ENCODE measurements at regions of chr4 and their contacts with region 1.

Region 1: DNA sequence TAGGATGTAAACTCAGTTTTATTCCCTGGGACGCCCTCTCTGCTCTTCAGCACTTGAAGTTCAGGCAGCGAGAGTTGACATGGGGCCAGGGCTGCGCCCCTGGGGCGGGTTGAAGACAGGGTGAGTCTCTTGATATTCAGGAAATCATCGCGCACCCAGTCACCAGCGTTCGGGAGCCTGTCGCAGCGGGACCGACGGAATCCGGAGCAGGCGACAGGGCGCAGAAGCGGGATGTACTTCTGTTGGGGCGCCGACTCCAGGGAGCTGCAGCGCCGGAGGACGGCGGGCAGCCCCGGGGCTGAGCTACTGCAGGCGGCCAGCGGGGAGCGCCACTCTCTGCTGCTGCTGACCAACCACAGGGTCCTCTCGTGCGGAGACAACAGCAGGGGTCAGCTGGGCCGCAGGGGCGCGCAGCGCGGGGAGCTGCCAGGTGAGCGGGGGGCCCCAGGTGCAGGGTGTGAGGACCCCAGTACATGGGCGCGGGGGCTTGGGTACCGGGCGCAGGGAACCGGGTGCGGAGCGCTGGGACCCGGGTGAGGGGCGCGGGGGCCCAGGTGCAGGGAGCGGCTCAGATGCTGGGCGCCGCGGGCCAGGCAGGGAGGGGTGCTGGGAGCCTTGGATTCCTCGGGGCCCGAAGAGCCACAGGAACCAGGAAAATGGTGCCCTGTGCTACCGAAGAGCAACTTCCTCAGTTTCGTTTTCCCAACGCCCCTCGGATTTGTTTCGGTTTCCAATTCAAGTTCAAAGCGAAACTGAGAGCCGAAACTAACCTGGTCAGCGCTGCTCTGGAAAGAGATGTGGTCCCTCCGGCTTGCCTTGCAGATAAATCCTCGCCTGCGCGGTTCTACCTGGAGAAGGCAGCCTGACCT is at the start of gene HERC6:
- DNase-seq: peak; percentile 12 to 84 (median 72)
- H3K4me3 ChIP-seq: peak within 1 kb of the TSS; percentile 63 to 99 (median 91)
- H3K27ac ChIP-seq: peak within 1 kb of the TSS; percentile 70 to 99 (median 92)
- H3K27me3 ChIP-seq: no peaks in the 10 kb centered on the region
- CTCF ChIP-seq: peak in 54 of 56 donors; percentile 30 to 79 (median 64)
- total RNA-seq, gene HERC6: 8.9 to 84.3 (median 23.3) TPM

Region 2: DNA sequence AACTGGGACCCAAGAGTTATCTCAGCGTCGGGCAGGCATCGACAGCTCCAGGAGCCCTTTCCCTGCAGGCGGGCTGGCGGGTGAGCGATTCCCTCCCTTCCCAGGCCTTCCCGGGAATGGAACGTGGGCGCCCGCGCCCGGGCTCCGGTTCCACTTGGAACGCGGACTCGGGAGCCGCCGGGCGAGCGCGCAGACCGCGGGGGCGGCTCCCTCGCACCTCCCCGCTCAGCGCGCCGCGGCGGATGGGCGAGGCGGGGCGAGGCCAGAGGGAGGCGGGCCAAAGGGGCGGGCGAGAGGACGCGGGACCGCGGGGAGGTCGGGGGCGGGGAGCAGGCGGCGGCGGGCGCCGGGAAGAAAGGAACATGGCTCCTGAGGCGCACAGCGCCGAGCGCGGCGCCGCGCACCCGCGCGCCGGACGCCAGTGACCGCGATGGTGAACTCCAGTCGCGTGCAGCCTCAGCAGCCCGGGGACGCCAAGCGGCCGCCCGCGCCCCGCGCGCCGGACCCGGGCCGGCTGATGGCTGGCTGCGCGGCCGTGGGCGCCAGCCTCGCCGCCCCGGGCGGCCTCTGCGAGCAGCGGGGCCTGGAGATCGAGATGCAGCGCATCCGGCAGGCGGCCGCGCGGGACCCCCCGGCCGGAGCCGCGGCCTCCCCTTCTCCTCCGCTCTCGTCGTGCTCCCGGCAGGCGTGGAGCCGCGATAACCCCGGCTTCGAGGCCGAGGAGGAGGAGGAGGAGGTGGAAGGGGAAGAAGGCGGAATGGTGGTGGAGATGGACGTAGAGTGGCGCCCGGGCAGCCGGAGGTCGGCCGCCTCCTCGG is 371.4 kb before region 1 on chr4 and contains the start of gene PKD2:
- intact Hi-C with region 1: loop called in 1 of 2 experiments (anchors 10 kb)
- DNase-seq: peak; percentile 76 to 93 (median 84)
- H3K4me3 ChIP-seq: peak within 1 kb of the TSS; percentile 64 to 94 (median 84)
- H3K27ac ChIP-seq: peak within 1 kb of the TSS; percentile 64 to 97 (median 91)
- H3K27me3 ChIP-seq: no peaks in the 10 kb centered on the region
- CTCF ChIP-seq: peak in 11 of 56 donors; percentile 9 to 30 (median 16)
- total RNA-seq, gene PKD2: 29.7 to 60.9 (median 40.7) TPM

Region 3: DNA sequence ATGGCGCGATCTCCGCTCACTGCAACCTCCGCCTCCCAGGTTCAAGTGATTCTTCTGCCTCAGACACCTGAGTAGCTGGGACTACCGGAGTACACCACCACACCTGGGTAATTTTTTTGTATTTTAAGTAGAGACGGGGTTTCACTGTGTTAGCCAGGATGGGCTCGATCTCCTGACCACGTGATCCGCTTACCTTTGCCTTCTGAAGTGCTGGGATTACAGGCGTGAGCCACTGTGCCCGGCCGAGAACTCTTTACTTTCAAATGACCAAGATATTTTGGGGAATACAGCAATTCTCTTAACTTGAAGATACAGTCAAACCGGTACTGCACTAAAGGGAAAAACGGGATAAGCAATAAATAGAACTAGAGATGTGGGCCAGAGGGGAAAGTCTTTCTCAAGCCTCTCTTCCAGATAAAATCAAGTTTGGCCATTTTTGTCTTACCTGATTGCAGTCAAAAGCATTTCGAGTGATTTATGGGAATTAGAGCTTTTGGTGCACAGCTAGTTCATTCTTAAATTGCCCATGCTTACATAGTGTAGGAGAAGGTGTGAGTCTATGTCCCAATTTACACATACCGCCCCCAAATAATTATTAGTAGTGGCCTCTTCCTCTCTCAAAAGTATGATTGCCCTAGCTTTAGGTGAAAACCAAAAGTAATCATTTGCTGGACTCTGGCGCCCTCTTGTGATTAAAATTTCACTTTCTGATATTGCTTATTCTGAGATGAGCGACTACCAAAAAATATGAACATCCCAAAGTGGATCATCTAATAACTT is 167.3 kb before region 1 on chr4:
- intact Hi-C with region 1: loop called in 1 of 2 experiments (anchors 10 kb)
- DNase-seq: peak in 3 of 10 donors; percentile 5 to 49 (median 46)
- H3K4me3 ChIP-seq: no peak overlapping the region
- H3K27ac ChIP-seq: no peak overlapping the region
- H3K27me3 ChIP-seq: no peaks in the 10 kb centered on the region
- CTCF ChIP-seq: peak; percentile 67 to 92 (median 82)

Region 4: DNA sequence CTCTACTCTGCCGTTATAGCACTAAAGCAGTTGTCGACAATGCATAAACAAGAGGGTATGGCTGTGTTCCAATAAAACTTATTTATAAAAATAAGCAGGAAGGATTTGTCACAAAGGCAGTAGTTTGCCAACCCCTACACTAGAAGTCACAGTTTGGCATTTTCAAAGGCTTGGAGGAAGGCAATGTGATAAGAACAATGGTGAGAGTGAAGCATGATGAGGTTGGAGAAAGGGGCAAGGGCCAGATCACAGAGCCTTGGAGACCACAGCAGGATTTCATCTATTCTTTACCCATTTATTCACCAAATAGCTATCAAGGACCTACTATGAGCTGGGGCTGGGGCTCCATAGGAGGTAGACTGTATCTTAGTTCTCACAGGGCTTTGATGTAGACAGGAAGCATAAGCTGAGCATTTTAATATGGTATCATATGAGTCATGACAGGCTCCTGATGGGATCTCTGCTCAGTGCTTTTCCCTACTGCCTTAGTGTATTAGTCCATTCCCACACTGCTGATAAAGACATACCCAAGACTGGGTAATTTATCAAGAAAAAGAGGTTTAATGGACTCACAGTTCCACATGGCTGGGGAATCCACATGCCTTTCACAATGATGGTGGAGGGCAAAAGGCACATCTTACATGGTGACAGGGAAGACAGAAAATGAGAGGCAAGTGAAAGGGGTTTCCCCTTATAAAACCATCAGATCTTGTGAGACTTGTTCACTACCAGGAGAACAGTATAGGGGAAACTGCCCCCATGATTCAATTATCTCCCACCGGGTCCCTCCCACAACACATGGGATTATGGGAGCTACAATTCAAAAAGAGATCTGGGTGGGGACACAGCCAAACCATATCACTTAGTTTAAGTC is 153.5 kb before region 1 on chr4:
- intact Hi-C with region 1: loop called in 1 of 2 experiments (anchors 5 kb)
- DNase-seq: no peak
- H3K4me3 ChIP-seq: no peak overlapping the region
- H3K27ac ChIP-seq: no peak overlapping the region
- H3K27me3 ChIP-seq: no peaks in the 10 kb centered on the region
- CTCF ChIP-seq: no peak

Region 5: GRCh38 chr4:88456757-88457306 is 77.9 kb after region 1 on chr4 and contains the start of gene HERC5:
- intact Hi-C with region 1: loop called (anchors 5 kb)
- DNase-seq: peak; percentile 22 to 79 (median 74)
- H3K4me3 ChIP-seq: peak within 1 kb of the TSS; percentile 47 to 90 (median 75)
- H3K27ac ChIP-seq: peak within 1 kb of the TSS in 53 of 59 donors; percentile 0 to 86 (median 64)
- H3K27me3 ChIP-seq: peaks cover 0 to 7% (median 0%) of the 10 kb centered on the region in 45 donors
- CTCF ChIP-seq: peak; percentile 53 to 85 (median 70)
- total RNA-seq, gene HERC5: 1.6 to 17.3 (median 4.0) TPM

Region 6: DNA sequence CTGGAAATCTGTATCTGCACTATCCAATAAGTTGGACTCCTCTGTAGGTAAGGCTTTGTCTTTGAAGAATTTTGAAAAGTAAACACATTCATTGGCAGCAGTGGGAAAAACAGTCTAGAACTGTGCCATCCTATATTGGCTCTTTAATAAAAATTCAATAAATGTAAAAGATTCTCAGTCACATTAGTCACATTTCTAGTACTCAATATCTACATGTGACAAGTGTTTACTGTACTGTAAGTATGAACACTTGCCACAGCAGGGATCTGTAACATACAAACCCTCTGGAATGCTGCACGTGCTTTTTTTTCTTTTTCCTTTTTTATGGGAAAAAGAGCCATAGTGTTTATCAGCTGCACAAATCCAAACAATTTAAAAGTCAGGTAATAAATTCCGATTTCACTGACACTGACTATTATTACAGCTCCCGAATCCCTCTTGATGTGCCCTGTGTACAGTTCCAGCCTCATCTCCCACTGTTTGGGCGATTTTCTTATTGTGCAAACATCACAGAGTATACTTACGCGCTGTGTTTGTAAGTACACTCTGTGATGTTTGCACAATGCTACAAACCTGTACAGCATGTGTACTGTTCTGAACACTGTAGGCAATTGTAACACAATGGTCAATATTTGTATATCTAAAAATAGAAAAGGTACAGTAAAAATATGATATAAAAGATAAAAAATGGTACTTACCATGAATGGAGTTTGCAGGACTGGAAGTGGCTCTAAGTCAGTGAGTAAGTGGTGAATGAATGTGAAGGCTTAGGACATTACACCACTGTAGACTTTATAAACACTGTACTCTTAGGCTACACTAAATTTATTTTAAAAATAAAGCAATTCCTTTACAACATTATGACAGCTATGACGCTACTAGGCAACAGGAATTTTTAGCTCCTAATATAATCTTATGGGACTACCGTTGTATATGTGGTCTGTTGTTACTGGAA is 135.9 kb after region 1 on chr4:
- intact Hi-C with region 1: loop called (anchors 5 kb)
- DNase-seq: no peak
- H3K4me3 ChIP-seq: peak overlapping the region in 22 of 59 donors; percentile 3 to 46 (median 23)
- H3K27ac ChIP-seq: peak overlapping the region in 1 of 59 donors; percentile 68
- H3K27me3 ChIP-seq: no peaks in the 10 kb centered on the region
- CTCF ChIP-seq: no peak

Region 7: DNA sequence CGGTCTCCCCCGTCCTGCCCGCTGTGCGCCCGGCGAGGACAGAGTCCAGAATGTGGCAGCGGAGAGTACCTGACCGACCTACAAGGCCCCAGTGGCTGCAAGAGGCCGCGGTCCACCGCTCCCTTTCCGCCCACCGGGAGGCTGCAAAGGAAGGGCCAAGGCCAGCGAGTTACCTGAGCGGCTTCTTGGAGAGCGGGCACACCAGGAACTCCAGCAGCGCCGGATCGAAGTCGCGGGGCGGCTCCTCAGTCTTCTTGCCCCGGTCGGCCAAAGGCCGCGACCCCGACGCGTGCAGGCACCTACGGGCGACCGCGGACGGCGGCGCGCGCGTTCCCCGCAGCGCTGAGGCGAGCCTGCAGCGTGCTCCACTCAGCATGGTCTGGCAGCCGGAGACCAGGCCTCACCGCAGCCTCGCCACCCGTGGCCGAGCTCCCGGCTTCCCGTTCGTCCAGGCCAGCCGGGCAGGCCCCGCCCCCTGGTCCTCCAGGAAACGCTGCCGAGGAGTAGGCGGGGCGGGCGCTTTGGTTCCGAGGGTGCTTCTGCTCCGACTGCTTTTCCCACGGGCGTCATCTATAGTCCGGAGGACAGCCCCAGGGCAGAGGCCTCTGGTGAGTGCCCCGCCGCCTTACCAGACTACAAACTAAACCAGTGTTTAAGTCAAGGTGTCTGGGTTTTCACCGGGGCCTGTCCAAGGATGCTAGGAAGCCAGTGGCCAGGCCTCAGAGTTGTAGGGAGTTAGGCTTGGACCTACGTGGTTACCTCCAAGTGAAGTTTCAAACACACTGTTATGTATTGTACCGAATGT is 144.6 kb after region 1 on chr4 and contains the start of gene PYURF:
- intact Hi-C with region 1: loop called (anchors 5 kb)
- DNase-seq: peak; percentile 88 to 96 (median 94)
- H3K4me3 ChIP-seq: peak within 1 kb of the TSS; percentile 56 to 98 (median 87)
- H3K27ac ChIP-seq: peak within 1 kb of the TSS; percentile 54 to 96 (median 91)
- H3K27me3 ChIP-seq: no peaks in the 10 kb centered on the region
- CTCF ChIP-seq: peak in 35 of 56 donors; percentile 10 to 60 (median 31)
- total RNA-seq, gene PYURF: 31.5 to 63.5 (median 49.8) TPM

Region 8: GRCh38 chr4:88635066-88635465 is 256.1 kb after region 1 on chr4:
- intact Hi-C with region 1: no loop called
- DNase-seq: no peak
- H3K4me3 ChIP-seq: no peak overlapping the region
- H3K27ac ChIP-seq: no peak overlapping the region
- H3K27me3 ChIP-seq: no peaks in the 10 kb centered on the region
- CTCF ChIP-seq: no peak